Activated CD8-positive, alpha-beta T cell treated with anti-CD3 and anti-CD28 coated beads, Interleukin-2, amount 10 ng/mL, durations not matched to agents 7 days and 5 days (primary cell): ENCODE measurements at regions of chr20 and their contacts with region 1.

Region 1: DNA sequence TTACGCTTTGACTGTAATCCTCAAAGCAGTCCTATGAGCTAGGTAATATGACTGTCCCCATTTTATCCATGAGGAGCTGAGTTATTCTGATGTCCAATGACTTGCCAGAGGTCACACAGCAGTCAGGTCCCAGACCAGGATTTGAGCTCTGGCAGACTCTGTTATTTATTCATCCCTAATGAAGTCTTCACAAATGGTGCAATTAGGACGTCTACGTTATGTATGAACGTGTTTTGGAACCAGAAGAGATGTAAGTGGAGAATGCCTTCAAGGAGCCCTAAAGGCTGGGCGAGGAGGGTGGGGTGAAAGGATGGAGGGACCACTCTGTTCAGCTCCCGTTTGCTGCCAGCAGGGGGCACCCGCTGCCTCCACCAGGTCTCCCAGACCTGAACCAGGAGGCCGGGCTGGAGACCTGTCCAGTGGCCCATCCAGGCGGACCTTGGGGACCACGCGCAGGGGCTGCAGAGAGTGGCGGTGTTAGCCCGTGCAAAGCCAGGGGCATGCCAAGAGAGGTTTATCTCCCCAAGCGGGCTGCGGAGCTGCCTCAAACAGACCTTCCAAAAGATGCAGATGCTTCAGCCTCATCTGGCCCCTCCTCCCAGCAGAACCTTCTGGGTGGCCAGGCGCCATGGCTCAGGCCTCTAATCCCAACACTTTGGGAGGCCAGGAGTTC is 15.2 kb upstream of the ZNF335 start:
- DNase-seq: peak; percentile 84
- ATAC-seq: peak; percentile 99
- H3K4me3 Mint-ChIP-seq: no peak overlapping the region
- H3K27ac Mint-ChIP-seq: no peak overlapping the region
- H3K4me1 Mint-ChIP-seq: peaks cover 11% of the 10 kb centered on the region
- H3K27me3 Mint-ChIP-seq: peaks cover 28% of the 10 kb centered on the region

Region 2: DNA sequence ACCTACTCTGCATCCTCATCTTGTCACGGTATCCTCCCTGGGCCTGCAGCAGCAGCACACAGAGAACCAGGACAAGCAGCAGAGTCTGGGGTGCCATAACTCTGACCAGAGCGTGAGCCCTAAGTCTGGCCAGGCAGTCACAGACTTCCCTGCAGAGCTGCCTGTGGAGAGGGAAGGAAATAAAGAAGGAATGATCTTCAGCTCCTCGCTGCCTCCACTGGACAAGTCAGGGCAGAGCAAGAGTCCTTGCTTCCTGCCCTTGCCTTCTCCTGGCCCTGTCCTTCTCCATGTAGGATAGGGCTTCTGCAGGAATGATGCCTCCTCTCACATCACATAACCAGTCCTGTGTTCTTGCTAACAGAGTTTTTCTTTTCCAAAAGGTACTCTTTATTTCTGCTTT is 301.3 kb before region 1 on chr20:
- CTCF ChIA-PET with region 1: no interaction called
- POLR2A ChIA-PET with region 1: no interaction called
- DNase-seq: no peak
- ATAC-seq: no peak
- H3K4me3 Mint-ChIP-seq: no peak overlapping the region
- H3K27ac Mint-ChIP-seq: no peak overlapping the region
- H3K4me1 Mint-ChIP-seq: peaks cover 4% of the 10 kb centered on the region
- H3K27me3 Mint-ChIP-seq: peaks cover 3% of the 10 kb centered on the region

Region 3: GRCh38 chr20:45910670-45911485 is 76.4 kb before region 1 on chr20:
- CTCF ChIA-PET with region 1: no interaction called
- POLR2A ChIA-PET with region 1: no interaction called
- DNase-seq: peak; percentile 98
- ATAC-seq: peak; percentile 95
- H3K4me3 Mint-ChIP-seq: peak overlapping the region; percentile 77
- H3K27ac Mint-ChIP-seq: peak overlapping the region; percentile 88
- H3K4me1 Mint-ChIP-seq: peaks cover 25% of the 10 kb centered on the region
- H3K27me3 Mint-ChIP-seq: peaks cover 16% of the 10 kb centered on the region

Region 4: GRCh38 chr20:45948742-45949541 is 38.3 kb before region 1 on chr20:
- CTCF ChIA-PET with region 1: no interaction called
- POLR2A ChIA-PET with region 1: no interaction called
- DNase-seq: no peak
- ATAC-seq: no peak
- H3K4me3 Mint-ChIP-seq: no peak overlapping the region
- H3K27ac Mint-ChIP-seq: peak overlapping the region; percentile 37
- H3K4me1 Mint-ChIP-seq: peaks cover 8% of the 10 kb centered on the region
- H3K27me3 Mint-ChIP-seq: no peaks in the 10 kb centered on the region

Region 5: DNA sequence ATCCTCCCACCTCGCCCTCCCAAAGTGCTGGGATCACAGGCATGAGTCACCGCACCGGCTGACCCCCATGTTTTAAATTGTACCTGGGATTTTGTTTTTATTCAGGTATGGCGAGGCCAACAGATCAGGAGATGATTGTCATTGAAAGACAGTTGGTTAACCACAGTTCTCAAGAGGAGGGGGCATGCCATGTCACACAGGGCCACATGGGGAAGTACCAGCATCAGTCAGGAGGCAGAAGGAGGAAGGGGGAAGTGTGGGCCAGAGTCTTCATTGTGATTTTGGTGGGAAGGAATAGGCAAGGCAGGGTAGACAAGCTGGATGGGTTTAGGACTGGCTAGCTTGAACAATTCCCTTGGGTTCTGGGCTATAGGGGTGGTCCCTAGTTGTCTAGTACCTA is 11.5 kb after region 1 on chr20:
- CTCF ChIA-PET with region 1: interaction called, 83 read pairs
- POLR2A ChIA-PET with region 1: interaction called, 4 read pairs
- DNase-seq: peak; percentile 38
- ATAC-seq: peak; percentile 61
- H3K4me3 Mint-ChIP-seq: no peak overlapping the region
- H3K27ac Mint-ChIP-seq: peak overlapping the region; percentile 0
- H3K4me1 Mint-ChIP-seq: peaks cover 62% of the 10 kb centered on the region
- H3K27me3 Mint-ChIP-seq: peaks cover 15% of the 10 kb centered on the region

Region 6: DNA sequence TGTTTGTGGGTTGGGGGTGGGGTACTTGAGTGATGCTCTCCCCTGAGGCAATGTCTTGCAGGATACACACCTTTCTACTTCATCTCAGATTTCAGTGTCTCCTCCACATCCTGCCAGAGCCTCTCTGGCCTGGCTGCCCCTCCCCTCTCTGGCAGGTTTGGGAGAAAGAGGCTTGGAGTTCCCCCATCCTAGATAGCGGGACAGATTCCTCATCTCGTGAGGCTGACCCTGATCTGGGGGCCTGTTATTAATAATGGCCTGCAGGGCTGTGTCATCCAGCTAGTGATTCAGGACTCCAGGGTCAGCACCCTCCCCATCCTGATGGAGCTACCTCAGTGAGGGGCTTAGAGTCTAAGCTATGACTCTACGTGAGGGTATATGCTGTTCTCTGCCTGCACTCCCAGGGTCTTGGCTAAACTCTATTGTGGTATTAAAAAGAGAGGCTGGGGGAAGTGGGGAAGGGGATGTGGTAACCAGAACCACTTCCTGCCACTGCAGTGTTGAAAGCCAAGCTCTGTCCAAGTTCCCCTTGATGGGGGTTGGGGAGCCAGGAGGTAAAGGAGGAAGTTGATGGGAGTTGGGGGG is 17.7 kb after region 1 on chr20:
- CTCF ChIA-PET with region 1: interaction called, 83 read pairs
- POLR2A ChIA-PET with region 1: interaction called, 4 read pairs
- DNase-seq: peak; percentile 73
- ATAC-seq: peak; percentile 59
- H3K4me3 Mint-ChIP-seq: peak overlapping the region; percentile 57
- H3K27ac Mint-ChIP-seq: peak overlapping the region; percentile 76
- H3K4me1 Mint-ChIP-seq: peaks cover 77% of the 10 kb centered on the region
- H3K27me3 Mint-ChIP-seq: peaks cover 43% of the 10 kb centered on the region

Region 7: DNA sequence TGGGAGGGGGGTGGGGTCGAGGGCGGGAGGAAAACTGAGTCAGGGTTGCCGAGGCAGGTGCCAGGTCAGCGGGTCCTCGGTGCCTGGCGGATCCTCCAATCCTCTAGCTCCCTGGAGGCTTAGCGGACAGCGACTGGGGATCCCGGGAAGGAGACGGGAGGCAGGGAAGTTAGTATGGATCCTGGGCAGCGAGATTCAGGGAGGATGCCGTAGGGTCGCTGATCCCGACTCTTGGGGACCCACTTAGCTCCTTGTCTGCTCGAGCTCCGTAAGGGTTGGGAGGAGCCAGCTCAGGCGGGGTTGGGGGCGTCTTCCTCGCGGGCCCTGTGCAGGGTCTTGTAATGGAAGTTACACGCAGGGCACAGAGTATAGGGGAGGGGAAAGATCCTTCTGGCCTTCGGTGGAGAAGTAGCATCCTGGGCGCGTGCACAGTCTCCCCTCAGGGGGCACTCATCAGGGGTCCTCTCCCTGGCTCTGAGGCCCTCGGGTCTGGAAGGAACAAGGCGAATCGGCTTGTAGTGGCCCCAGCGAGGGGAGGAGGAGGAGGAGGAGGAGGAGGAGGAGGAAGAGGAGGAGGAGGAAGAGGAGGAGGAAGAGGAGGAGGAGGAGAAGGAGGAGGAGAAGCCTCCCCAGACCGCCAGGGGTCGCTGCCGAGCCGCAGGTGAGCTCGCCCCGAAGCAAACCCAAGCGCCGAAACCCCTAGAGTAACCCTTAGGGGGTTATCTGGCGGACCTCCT is 35.3 kb after region 1 on chr20:
- CTCF ChIA-PET with region 1: interaction called, 23 read pairs
- POLR2A ChIA-PET with region 1: no interaction called
- DNase-seq: peak; percentile 82
- ATAC-seq: peak; percentile 74
- H3K4me3 Mint-ChIP-seq: peak overlapping the region; percentile 57
- H3K27ac Mint-ChIP-seq: no peak overlapping the region
- H3K4me1 Mint-ChIP-seq: peaks cover 24% of the 10 kb centered on the region
- H3K27me3 Mint-ChIP-seq: peaks cover 33% of the 10 kb centered on the region

Region 8: DNA sequence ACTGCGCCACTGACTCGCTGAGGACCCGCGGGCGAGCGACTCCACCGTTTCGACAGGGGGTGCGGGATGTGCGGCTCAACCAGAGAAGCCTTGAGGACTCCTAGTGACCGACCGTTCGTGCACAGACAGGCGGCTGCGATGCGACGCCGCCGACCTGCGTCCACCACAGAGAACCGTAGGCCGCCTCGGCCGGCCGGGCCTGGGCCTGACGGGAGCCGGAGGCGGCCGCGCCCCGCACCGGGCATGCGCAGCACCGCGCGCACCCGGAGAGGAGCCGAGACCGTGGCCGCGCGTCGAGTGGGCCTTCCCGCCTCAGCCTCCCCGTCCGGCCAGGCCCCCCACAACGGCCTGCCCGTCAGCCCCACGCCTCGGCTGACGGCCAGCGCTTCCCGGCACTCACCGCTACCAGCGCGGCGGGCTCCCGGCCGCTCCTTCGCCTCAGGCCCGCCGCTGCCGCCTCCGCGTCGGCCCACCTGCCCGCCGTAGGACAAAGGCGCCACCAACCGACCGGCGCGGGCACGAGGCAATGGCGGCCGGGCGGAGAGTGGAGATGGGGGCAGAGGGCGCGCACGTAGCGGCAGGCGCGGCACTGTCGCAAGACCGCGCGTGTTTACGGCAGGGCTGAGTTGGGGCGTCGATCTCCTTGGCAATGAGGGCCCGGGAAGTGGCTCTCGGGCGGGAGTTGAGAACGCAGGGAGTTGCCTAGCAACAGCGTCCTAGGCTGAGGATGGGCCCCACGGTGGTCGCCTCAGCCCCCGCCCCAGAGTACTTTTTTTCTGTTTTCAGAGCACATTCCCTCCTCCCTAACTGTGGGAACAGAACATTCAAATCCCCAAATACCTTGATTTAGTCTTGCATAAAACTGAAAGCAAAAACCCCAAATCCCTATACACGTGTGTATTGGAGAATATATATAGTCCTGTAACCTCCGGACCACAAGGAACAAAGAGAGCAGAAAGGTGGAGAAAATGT is 102.5 kb after region 1 on chr20 and contains the start of gene NCOA5:
- CTCF ChIA-PET with region 1: interaction called, 17 read pairs
- POLR2A ChIA-PET with region 1: no interaction called
- DNase-seq: peak; percentile 96
- ATAC-seq: peak; percentile 91
- H3K4me3 Mint-ChIP-seq: peak within 1 kb of the TSS; percentile 78
- H3K27ac Mint-ChIP-seq: peak within 1 kb of the TSS; percentile 86
- H3K4me1 Mint-ChIP-seq: peaks cover 40% of the 10 kb centered on the region
- H3K27me3 Mint-ChIP-seq: no peaks in the 10 kb centered on the region
- total RNA-seq, gene NCOA5: 30.3 to 30.9 TPM